ENCODE measurements at regions of chr4 and their contacts with region 1.

Region 1: DNA sequence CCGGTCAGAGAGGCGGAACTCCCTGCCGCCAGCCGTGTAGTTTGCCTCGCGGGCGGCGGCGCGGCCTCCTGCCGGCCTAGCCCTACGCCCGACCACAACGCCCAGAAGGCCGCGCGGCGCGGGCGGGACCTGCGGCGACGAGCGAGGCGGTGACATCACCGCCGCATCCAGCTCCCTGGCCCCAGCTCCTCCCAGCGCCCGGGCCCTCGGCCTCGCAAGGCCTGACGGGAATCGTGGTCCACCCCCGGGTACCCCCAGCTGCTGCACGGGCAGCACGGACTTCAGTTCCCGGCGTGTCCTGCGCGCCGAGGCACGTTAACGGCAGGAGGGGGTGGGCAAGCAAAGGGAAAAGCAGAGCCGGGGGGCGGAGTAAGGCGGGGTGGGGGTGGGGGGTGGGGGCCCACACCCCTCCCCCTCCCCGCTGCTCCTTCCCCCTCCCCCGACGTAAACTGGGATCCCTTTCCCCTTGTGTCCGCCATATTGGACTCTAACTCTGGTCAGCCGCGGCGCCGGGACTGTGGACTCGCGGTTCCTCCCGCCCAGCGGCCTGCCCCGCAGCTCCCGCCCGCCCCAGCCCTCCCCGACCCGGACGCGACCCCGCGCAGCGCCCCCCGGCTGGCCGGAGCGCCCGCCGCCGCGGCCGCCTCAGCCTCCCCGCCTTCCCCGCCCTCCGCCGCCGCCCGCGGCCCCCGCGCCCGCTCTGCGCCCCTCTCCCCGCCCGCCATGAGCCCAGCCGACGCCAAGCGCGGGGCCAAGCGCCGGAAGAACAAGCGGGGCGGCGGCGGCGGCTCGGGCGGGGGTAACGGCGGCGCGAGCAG is at the start of gene FAM193A:
- DNase-seq: peak; percentile 100
- ATAC-seq: peak; percentile 100
- H3K4me3 ChIP-seq: peak within 1 kb of the TSS; percentile 96 to 97
- H3K27ac ChIP-seq: peak within 1 kb of the TSS; percentile 93 to 95
- H3K4me1 ChIP-seq: no peaks in the 10 kb centered on the region
- H3K27me3 ChIP-seq: no peaks in the 10 kb centered on the region
- total RNA-seq, gene FAM193A: 23.8 to 41.6 TPM

Region 2: GRCh38 chr4:2241410-2242353 is 294.7 kb before region 1 on chr4 and contains the starts of genes HAUS3 and POLN:
- intact Hi-C with region 1: loop called in 1 of 2 experiments (anchors 10 kb)
- DNase-seq: peak; percentile 99 to 100
- ATAC-seq: peak; percentile 99
- H3K4me3 ChIP-seq: peak within 1 kb of the TSS; percentile 58 to 66
- H3K27ac ChIP-seq: peak within 1 kb of the TSS in 1 of 2 donors; percentile 22
- H3K4me1 ChIP-seq: peaks cover 0 to 3% of the 10 kb centered on the region in 2 donors
- H3K27me3 ChIP-seq: no peaks in the 10 kb centered on the region
- total RNA-seq, gene HAUS3: 11.1 to 16.2 TPM
- total RNA-seq, gene POLN: 3.2 to 6.6 TPM

Region 3: GRCh38 chr4:2468445-2469192 is 67.8 kb before region 1 on chr4 and contains the start of gene RNF4:
- intact Hi-C with region 1: loop called (anchors 1 to 5 kb)
- DNase-seq: peak; percentile 98
- ATAC-seq: peak; percentile 96
- H3K4me3 ChIP-seq: peak within 1 kb of the TSS; percentile 79 to 87
- H3K27ac ChIP-seq: peak within 1 kb of the TSS; percentile 23 to 41
- H3K4me1 ChIP-seq: peaks cover 0 to 3% of the 10 kb centered on the region in 2 donors
- H3K27me3 ChIP-seq: no peaks in the 10 kb centered on the region
- total RNA-seq, gene RNF4: 50.7 to 52.5 TPM

Region 4: GRCh38 chr4:2637956-2638552 is 101.7 kb after region 1 on chr4:
- intact Hi-C with region 1: no loop called
- DNase-seq: peak in 1 of 2 donors; percentile 36
- ATAC-seq: no peak
- H3K4me3 ChIP-seq: no peak overlapping the region
- H3K27ac ChIP-seq: no peak overlapping the region
- H3K4me1 ChIP-seq: no peaks in the 10 kb centered on the region
- H3K27me3 ChIP-seq: no peaks in the 10 kb centered on the region

Region 5: GRCh38 chr4:2662598-2662997 is 126.2 kb after region 1 on chr4:
- intact Hi-C with region 1: loop called in 1 of 2 experiments (anchors 10 kb)
- DNase-seq: no peak
- ATAC-seq: no peak
- H3K4me3 ChIP-seq: no peak overlapping the region
- H3K27ac ChIP-seq: peak overlapping the region in 1 of 2 donors; percentile 13
- H3K4me1 ChIP-seq: peaks cover 0 to 3% of the 10 kb centered on the region in 2 donors
- H3K27me3 ChIP-seq: no peaks in the 10 kb centered on the region

Region 6: GRCh38 chr4:2755837-2756694 is 219.7 kb after region 1 on chr4 and contains the start of gene TNIP2:
- intact Hi-C with region 1: loop called in 1 of 2 experiments (anchors 10 kb)
- DNase-seq: peak; percentile 92 to 95
- ATAC-seq: peak; percentile 93
- H3K4me3 ChIP-seq: peak within 1 kb of the TSS; percentile 1 to 51
- H3K27ac ChIP-seq: peak within 1 kb of the TSS in 1 of 2 donors; percentile 32
- H3K4me1 ChIP-seq: no peaks in the 10 kb centered on the region
- H3K27me3 ChIP-seq: no peaks in the 10 kb centered on the region
- total RNA-seq, gene TNIP2: 37.4 to 39.4 TPM